Activated CD8-positive, alpha-beta T cell treated with anti-CD3 and anti-CD28 coated beads, Interleukin-2, amount 10 ng/mL, durations not matched to agents 7 days and 5 days (primary cell): ENCODE measurements at regions of chr1 and their contacts with region 1.

Region 1: GRCh38 chr1:33295450-33296081 is 25.3 kb downstream of the A3GALT2 start:
- DNase-seq: peak; percentile 92
- ATAC-seq: peak; percentile 93
- H3K4me3 Mint-ChIP-seq: no peak overlapping the region
- H3K27ac Mint-ChIP-seq: peak overlapping the region; percentile 25
- H3K4me1 Mint-ChIP-seq: peaks cover 22% of the 10 kb centered on the region
- H3K27me3 Mint-ChIP-seq: no peaks in the 10 kb centered on the region

Region 2: GRCh38 chr1:32992489-32993323 is 302.9 kb before region 1 on chr1:
- CTCF ChIA-PET with region 1: no interaction called
- POLR2A ChIA-PET with region 1: no interaction called
- DNase-seq: peak; percentile 64
- ATAC-seq: peak; percentile 79
- H3K4me3 Mint-ChIP-seq: peak overlapping the region; percentile 3
- H3K27ac Mint-ChIP-seq: peak overlapping the region; percentile 70
- H3K4me1 Mint-ChIP-seq: peaks cover 59% of the 10 kb centered on the region
- H3K27me3 Mint-ChIP-seq: no peaks in the 10 kb centered on the region

Region 3: DNA sequence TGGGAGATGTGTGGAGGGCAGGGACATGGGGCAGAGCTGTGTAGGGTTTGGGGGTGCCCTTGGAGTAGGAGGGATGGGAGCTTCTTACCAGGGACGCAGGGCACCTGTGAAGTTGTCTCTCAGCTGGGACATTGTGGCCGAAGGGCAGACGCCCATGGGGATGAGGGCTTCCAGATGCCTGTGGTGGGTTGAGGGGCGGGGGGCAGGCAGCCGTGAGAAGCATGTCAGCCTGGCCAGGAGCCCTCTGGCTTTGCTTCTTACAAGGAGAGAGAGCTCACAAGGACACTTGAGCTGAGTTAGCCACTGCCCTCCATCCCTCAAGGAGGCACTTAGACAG is 16.8 kb after region 1 on chr1:
- CTCF ChIA-PET with region 1: interaction called, 24 read pairs
- POLR2A ChIA-PET with region 1: no interaction called
- DNase-seq: no peak
- ATAC-seq: no peak
- H3K4me3 Mint-ChIP-seq: no peak overlapping the region
- H3K27ac Mint-ChIP-seq: no peak overlapping the region
- H3K4me1 Mint-ChIP-seq: peaks cover 2% of the 10 kb centered on the region
- H3K27me3 Mint-ChIP-seq: peaks cover 17% of the 10 kb centered on the region

Region 4: GRCh38 chr1:33349778-33350610 is 54.4 kb after region 1 on chr1:
- CTCF ChIA-PET with region 1: interaction called, 14 read pairs
- POLR2A ChIA-PET with region 1: interaction called, 4 read pairs
- DNase-seq: peak; percentile 82
- ATAC-seq: peak; percentile 91
- H3K4me3 Mint-ChIP-seq: peak overlapping the region; percentile 84
- H3K27ac Mint-ChIP-seq: peak overlapping the region; percentile 93
- H3K4me1 Mint-ChIP-seq: peaks cover 44% of the 10 kb centered on the region
- H3K27me3 Mint-ChIP-seq: peaks cover 3% of the 10 kb centered on the region

Region 5: GRCh38 chr1:33367485-33368405 is 72.2 kb after region 1 on chr1:
- CTCF ChIA-PET with region 1: interaction called, 29 read pairs
- POLR2A ChIA-PET with region 1: no interaction called
- DNase-seq: peak; percentile 89
- ATAC-seq: peak; percentile 97
- H3K4me3 Mint-ChIP-seq: no peak overlapping the region
- H3K27ac Mint-ChIP-seq: no peak overlapping the region
- H3K4me1 Mint-ChIP-seq: peaks cover 5% of the 10 kb centered on the region
- H3K27me3 Mint-ChIP-seq: peaks cover 2% of the 10 kb centered on the region

Region 6: GRCh38 chr1:33472349-33472980 is 176.9 kb after region 1 on chr1 and contains the start of gene ZSCAN20:
- CTCF ChIA-PET with region 1: interaction called, 75 read pairs
- POLR2A ChIA-PET with region 1: interaction called, 3 read pairs
- DNase-seq: peak; percentile 91
- ATAC-seq: peak; percentile 98
- H3K4me3 Mint-ChIP-seq: peak within 1 kb of the TSS; percentile 82
- H3K27ac Mint-ChIP-seq: peak within 1 kb of the TSS; percentile 60
- H3K4me1 Mint-ChIP-seq: peaks cover 43% of the 10 kb centered on the region
- H3K27me3 Mint-ChIP-seq: no peaks in the 10 kb centered on the region
- total RNA-seq, gene ZSCAN20: 1.8 to 2.1 TPM

Region 7: DNA sequence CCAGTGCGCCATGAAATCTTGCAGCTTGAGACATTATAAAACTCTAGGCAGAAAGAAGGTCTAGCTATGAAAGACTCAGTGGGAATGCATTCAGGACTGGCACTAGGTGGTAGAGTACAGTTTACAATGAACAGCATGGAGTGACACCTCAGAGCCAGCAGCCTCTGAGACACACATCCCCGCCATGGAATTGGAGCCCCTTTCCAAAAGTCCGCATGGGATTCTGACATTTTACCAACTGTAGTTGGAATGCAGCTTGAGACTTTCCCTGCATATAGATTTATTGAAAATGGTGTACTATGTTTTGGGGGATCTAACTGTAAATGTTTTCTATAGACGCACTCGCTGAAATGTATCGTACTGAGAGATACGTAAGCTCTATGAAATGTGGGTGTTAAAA is 293.2 kb after region 1 on chr1:
- CTCF ChIA-PET with region 1: no interaction called
- POLR2A ChIA-PET with region 1: no interaction called
- DNase-seq: no peak
- ATAC-seq: no peak
- H3K4me3 Mint-ChIP-seq: no peak overlapping the region
- H3K27ac Mint-ChIP-seq: no peak overlapping the region
- H3K4me1 Mint-ChIP-seq: no peaks in the 10 kb centered on the region
- H3K27me3 Mint-ChIP-seq: peaks cover 4% of the 10 kb centered on the region